Caco-2 (cell line): ENCODE measurements at regions of chr20 and their contacts with region 1.

Region 1: GRCh38 chr20:47075263-47075662 is 180.6 kb downstream of the EYA2 start:
- DNase-seq: peak; percentile 41 to 42
- H3K4me3 ChIP-seq: no peak overlapping the region
- H3K4me3 Mint-ChIP-seq: no peak overlapping the region
- H3K27ac Mint-ChIP-seq: no peak overlapping the region
- H3K4me1 ChIP-seq: peaks cover 4% of the 10 kb centered on the region; the same call in 1 of the 2 replicates
- H3K4me1 Mint-ChIP-seq: no peaks in the 10 kb centered on the region
- H3K27me3 ChIP-seq: no peaks in the 10 kb centered on the region
- H3K27me3 Mint-ChIP-seq: peaks cover 2% of the 10 kb centered on the region
- CTCF ChIP-seq: no peak

Region 2: DNA sequence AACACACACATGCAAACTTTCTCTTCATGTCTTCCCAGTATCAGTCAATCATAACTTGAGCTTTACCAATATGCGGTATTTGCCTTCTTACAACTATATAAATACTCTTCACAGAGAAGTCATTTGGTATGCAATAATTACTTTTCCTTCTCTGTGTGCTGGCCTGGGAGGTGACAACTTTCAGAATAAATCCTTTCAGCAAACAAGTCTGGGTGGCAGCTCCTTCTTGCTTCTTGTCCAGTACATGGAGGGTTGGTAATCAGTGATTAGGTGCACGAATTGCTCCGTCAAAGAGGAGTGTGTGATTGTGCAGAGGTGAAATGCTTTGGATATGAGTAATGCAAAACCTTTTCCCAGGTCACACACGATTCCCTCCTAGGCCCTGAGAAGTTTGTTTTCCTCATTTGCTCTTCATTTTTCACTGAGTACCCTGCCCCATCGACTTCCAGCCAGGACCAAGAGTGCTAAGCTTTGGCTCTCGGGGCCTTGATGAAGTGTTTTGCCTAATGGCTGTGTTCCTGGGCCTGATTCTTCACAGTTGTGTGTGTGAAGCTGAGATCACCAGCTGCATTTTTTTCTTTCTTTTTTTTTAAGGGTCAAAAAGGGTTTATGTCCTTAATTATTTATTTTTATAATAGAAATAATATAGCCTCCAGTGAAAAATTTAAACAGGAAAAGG is 64.7 kb after region 1 on chr20:
- CTCF ChIA-PET with region 1: interaction called, 6 read pairs
- POLR2A ChIA-PET with region 1: no interaction called
- intact Hi-C with region 1: loop called (anchors 1 kb)
- DNase-seq: peak; percentile 85 to 88
- H3K4me3 ChIP-seq: no peak overlapping the region
- H3K4me3 Mint-ChIP-seq: peak overlapping the region; percentile 34
- H3K27ac Mint-ChIP-seq: peak overlapping the region; percentile 76
- H3K4me1 ChIP-seq: peaks cover 32% of the 10 kb centered on the region
- H3K4me1 Mint-ChIP-seq: peaks cover 47% of the 10 kb centered on the region
- H3K27me3 ChIP-seq: no peaks in the 10 kb centered on the region
- H3K27me3 Mint-ChIP-seq: no peaks in the 10 kb centered on the region
- CTCF ChIP-seq: no peak